ENCODE measurements at regions of chr15 and their contacts with region 1.

Region 1: GRCh38 chr15:33086507-33087121 is 107.9 kb downstream of the FMN1 start:
- DNase-seq: peak; percentile 40 to 71
- ATAC-seq: peak; percentile 84 to 92; a peak in 5 of 6 replicates
- H3K4me3 ChIP-seq: no peak overlapping the region
- H3K27ac ChIP-seq: no peak overlapping the region
- H3K4me1 ChIP-seq: no peaks in the 10 kb centered on the region
- CTCF ChIP-seq: peak; percentile 88
- EP300 ChIP-seq: no peak
- POLR2A ChIP-seq: no peak
- RAD21 ChIP-seq: peak; percentile 84

Region 2: GRCh38 chr15:33021806-33022389 is 64.7 kb before region 1 on chr15:
- CTCF ChIA-PET with region 1: interaction called, 18 read pairs
- POLR2A ChIA-PET with region 1: no interaction called
- DNase-seq: peak; percentile 67 to 79
- ATAC-seq: peak; percentile 76 to 90; a peak in 4 of 6 replicates
- H3K4me3 ChIP-seq: no peak overlapping the region
- H3K27ac ChIP-seq: no peak overlapping the region
- H3K4me1 ChIP-seq: 0 out of 3 replicates have a peak, but pooled peaks cover 7% of the 10 kb centered on the region
- CTCF ChIP-seq: peak; percentile 89
- EP300 ChIP-seq: no peak
- POLR2A ChIP-seq: no peak
- RAD21 ChIP-seq: peak; percentile 77 to 78

Region 3: GRCh38 chr15:33098094-33099040 is 11.8 kb after region 1 on chr15:
- CTCF ChIA-PET with region 1: interaction called, 18 read pairs
- POLR2A ChIA-PET with region 1: no interaction called
- DNase-seq: no peak
- ATAC-seq: peak; percentile 34 to 61; a peak in 4 of 6 replicates
- H3K4me3 ChIP-seq: no peak overlapping the region
- H3K27ac ChIP-seq: no peak overlapping the region
- H3K4me1 ChIP-seq: no peaks in the 10 kb centered on the region
- CTCF ChIP-seq: no peak
- EP300 ChIP-seq: no peak
- POLR2A ChIP-seq: no peak
- RAD21 ChIP-seq: no peak

Region 4: GRCh38 chr15:33111041-33111451 is 24.4 kb after region 1 on chr15:
- CTCF ChIA-PET with region 1: interaction called, 16 read pairs
- POLR2A ChIA-PET with region 1: no interaction called
- DNase-seq: no peak
- ATAC-seq: no peak
- H3K4me3 ChIP-seq: no peak overlapping the region
- H3K27ac ChIP-seq: no peak overlapping the region
- H3K4me1 ChIP-seq: no peaks in the 10 kb centered on the region
- CTCF ChIP-seq: no peak
- EP300 ChIP-seq: no peak
- POLR2A ChIP-seq: no peak
- RAD21 ChIP-seq: no peak

Region 5: GRCh38 chr15:33226559-33227181 is 140.1 kb after region 1 on chr15:
- CTCF ChIA-PET with region 1: interaction called, 15 read pairs
- POLR2A ChIA-PET with region 1: no interaction called
- DNase-seq: peak; percentile 85 to 86
- ATAC-seq: peak; percentile 88 to 97
- H3K4me3 ChIP-seq: no peak overlapping the region
- H3K27ac ChIP-seq: no peak overlapping the region
- H3K4me1 ChIP-seq: no peaks in the 10 kb centered on the region
- CTCF ChIP-seq: peak; percentile 57
- EP300 ChIP-seq: no peak
- POLR2A ChIP-seq: no peak
- RAD21 ChIP-seq: peak; percentile 37 to 39; a peak in 4 of 5 replicates

Measured in A549 (cell line).